Aorta (tissue), 5 donors: ENCODE measurements at regions of chr12 and their contacts with region 1.

Region 1: DNA sequence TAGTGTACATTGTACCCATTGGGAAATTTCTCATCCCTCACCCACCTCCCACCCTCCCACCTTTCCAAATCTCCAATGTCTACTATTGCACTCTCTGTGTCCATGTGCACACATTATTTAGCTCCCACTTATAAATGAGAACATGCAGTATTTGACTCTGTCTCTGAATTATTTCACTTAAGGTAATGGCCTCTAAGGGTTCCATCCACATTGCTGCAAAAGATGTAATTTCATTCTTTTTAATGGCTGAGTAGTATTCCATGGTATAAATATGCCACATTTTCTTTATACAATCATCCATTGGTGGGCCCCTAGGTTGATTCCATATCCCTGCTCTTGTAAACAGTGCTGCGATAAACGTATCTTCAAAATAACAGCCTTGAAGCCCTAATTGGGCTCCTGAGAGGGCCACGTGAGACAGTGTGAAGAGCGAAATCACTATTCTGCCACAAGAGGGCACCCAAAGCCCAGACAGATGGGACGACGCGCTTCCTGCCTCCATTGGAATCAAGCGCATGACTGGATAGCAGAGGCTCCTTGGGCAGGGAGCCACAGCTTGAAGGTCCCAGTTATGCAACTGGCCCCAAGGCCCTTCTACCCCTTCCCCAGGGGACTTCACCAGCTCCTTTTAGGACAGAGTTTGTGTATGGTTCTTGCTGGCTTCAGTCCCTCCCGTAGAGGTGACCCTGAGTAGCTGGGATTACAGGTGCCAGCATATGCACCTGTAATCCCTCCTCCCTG is 21.3 kb upstream of the CD27 start:
- DNase-seq: peak; percentile 90 to 92
- ATAC-seq: peak; percentile 96
- H3K4me3 ChIP-seq: no peak overlapping the region
- H3K27ac ChIP-seq: no peak overlapping the region
- H3K4me1 ChIP-seq: no peaks in the 10 kb centered on the region
- H3K27me3 ChIP-seq: no peaks in the 10 kb centered on the region

Region 2: GRCh38 chr12:6341417-6342139 is 81.9 kb before region 1 on chr12 and contains the start of gene TNFRSF1A:
- intact Hi-C with region 1: loop called in 1 of 2 experiments (anchors 5 kb)
- DNase-seq: peak in 1 of 2 donors; percentile 90
- ATAC-seq: peak; percentile 82
- H3K4me3 ChIP-seq: peak within 1 kb of the TSS; percentile 32 to 74
- H3K27ac ChIP-seq: peak within 1 kb of the TSS; percentile 29 to 96
- H3K4me1 ChIP-seq: peaks cover 2 to 3% of the 10 kb centered on the region in 2 donors
- H3K27me3 ChIP-seq: no peaks in the 10 kb centered on the region
- total RNA-seq, gene TNFRSF1A: 190 to 236 TPM

Region 3: GRCh38 chr12:6470375-6471163 is 47.1 kb after region 1 on chr12 and contains the start of gene VAMP1:
- intact Hi-C with region 1: loop called (anchors 1 to 2 kb)
- DNase-seq: peak; percentile 99
- ATAC-seq: peak; percentile 99
- H3K4me3 ChIP-seq: peak within 1 kb of the TSS; percentile 32 to 47
- H3K27ac ChIP-seq: peak within 1 kb of the TSS in 1 of 2 donors; percentile 83
- H3K4me1 ChIP-seq: peaks cover 2 to 3% of the 10 kb centered on the region in 2 donors
- H3K27me3 ChIP-seq: no peaks in the 10 kb centered on the region
- total RNA-seq, gene VAMP1: 9.7 to 23.9 TPM

Region 4: DNA sequence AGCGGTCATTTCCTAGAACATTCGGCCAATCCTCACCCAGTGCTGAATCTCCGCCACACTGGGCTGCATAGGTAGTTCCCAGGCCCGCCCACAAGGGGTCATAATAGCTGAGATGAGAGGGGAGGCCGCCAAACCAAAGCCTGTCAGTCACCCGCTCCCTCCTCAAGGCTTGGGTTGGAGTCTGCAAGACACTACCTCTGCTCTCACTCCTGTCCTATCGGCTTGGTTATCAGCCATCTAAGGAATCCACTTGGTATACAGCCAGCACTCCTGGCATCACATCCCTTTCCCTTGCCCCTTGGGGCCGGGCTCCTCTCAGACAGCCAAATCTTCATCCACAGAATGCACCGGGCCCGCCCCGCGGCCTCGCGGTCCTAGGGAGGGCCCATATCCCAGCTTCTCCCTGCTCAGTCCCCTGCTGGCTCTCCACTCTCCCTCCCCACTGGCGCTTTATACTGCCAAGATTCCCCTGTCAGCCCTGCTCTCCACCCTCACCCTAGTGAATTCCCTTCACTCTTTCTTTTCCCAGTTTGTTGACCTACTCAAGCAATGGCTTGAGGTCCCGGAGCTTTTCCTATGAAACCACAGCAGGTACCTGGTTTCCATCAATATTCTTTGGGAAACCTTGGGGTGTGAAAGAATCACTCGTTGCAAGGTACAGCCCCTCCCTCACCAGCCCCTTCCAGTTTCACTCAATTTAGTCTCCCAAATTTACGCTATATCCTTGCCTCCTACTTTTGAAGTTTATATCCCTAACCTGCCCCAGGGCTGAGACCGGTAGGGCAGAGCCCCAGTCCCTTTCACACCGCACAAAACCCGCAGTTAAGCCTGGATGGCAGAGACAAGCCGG is 131.0 kb after region 1 on chr12:
- intact Hi-C with region 1: loop called in 1 of 2 experiments (anchors 5 kb)
- DNase-seq: peak; percentile 86 to 92
- ATAC-seq: peak; percentile 70
- H3K4me3 ChIP-seq: peak overlapping the region; percentile 63 to 78
- H3K27ac ChIP-seq: peak overlapping the region in 1 of 2 donors; percentile 50
- H3K4me1 ChIP-seq: peaks cover 0 to 3% of the 10 kb centered on the region in 2 donors
- H3K27me3 ChIP-seq: no peaks in the 10 kb centered on the region